Naive thymus-derived CD4-positive, alpha-beta T cell (primary cell): ENCODE measurements at regions of chr19 and their contacts with region 1.

Region 1: DNA sequence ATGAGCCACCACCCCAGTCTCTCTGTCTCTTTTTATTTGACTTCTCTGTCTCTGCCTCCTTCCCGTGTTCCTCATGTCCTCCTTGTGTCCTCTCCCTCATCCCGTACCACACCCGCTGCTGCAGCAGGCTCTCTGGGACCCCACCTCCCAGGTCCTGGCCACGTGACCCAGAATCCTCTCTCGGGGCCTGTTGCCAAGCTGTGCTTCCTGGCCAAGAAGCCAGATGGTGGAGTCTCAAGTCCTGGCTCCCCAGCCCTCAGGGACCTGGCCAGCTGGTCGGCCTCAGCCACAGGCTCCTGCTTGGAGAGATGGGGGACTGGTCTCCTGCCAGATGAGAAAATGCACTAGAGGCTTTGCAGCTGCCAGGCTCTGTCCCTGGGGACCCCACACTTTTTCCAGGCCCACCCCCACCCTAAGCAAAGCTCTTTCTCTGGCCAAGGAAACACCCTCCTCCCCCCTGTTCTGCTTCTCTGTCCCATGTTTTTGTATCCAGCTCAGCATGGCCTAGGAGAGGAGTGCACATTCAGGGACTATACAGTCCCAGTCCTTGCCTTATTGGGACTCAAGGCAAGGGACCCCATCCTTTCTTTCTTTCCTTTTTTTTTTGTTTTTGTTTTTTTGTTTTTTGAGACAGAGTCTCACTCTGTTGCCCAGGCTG is 34.3 kb upstream of the SHKBP1 start:
- DNase-seq: no peak
- ATAC-seq: no peak
- H3K4me3 ChIP-seq: no peak overlapping the region
- H3K4me3 Mint-ChIP-seq: no peak overlapping the region
- H3K27ac ChIP-seq: no peak overlapping the region
- H3K27ac Mint-ChIP-seq: no peak overlapping the region
- H3K4me1 ChIP-seq: no peaks in the 10 kb centered on the region
- H3K4me1 Mint-ChIP-seq: peaks cover 0 to 3% (median 0%) of the 10 kb centered on the region in 7 donors
- H3K27me3 ChIP-seq: no peaks in the 10 kb centered on the region
- H3K27me3 Mint-ChIP-seq: peaks cover 0 to 9% (median 6%) of the 10 kb centered on the region in 5 donors

Region 2: DNA sequence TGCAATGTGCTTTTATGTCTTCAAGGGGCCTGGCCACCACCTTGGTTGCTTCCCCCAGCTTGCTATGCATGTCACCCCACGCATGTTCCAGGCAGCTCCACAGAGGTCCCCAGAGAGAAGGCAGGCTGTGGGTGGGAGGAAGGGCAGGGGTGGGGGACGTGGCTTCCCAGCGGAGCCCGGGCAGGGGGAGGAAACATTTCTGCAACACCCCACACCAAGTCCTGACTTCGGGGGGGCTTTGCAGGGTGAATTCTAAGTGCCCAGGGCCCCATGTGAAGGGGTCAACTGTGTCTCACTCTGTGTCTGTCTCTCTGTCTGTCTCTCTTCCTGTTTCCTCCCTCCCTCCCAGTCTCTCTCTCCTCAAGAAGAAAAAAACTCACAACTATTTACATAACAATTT is 98.4 kb after region 1 on chr19:
- CTCF ChIA-PET with region 1: interaction called, 4 read pairs
- POLR2A ChIA-PET with region 1: no interaction called
- intact Hi-C with region 1: loop called in 1 of 2 experiments (anchors 2 kb)
- DNase-seq: peak in 2 of 9 donors; percentile 7 to 8
- ATAC-seq: no peak
- H3K4me3 ChIP-seq: no peak overlapping the region
- H3K4me3 Mint-ChIP-seq: no peak overlapping the region
- H3K27ac ChIP-seq: no peak overlapping the region
- H3K27ac Mint-ChIP-seq: peak overlapping the region in 3 of 9 donors; percentile 33 to 73 (median 60)
- H3K4me1 ChIP-seq: no peaks in the 10 kb centered on the region
- H3K4me1 Mint-ChIP-seq: peaks cover 0 to 12% (median 6%) of the 10 kb centered on the region in 7 donors
- H3K27me3 ChIP-seq: no peaks in the 10 kb centered on the region
- H3K27me3 Mint-ChIP-seq: peaks cover 0 to 8% (median 2%) of the 10 kb centered on the region in 5 donors